ENCODE measurements at regions of chr5 and their contacts with region 1.

Region 1: DNA sequence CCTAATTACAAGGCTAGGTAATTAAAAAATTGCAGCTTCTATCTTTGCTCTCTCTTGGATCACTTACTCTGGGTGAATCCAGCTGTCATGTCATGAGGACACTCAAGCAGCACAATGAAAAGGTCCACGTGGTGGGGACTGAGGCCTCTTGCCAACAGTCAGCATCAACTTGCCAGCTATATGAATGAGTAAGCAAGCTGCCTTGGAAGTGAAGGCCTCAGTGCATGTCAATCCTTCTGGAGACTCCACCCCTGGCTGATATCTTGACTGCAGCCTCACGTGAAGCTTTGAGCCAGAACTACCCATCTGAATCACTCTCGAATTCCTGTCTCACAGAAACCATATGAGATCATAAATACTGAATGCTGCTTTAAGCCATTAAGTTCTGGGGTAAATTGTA is 140.5 kb downstream of the SNX18 start:
- DNase-seq: no peak
- ATAC-seq: no peak

Region 2: GRCh38 chr5:54703133-54703532 is 45.1 kb after region 1 on chr5:
- intact Hi-C with region 1: loop called (anchors 5 kb)
- DNase-seq: no peak
- ATAC-seq: peak; percentile 74

Region 3: DNA sequence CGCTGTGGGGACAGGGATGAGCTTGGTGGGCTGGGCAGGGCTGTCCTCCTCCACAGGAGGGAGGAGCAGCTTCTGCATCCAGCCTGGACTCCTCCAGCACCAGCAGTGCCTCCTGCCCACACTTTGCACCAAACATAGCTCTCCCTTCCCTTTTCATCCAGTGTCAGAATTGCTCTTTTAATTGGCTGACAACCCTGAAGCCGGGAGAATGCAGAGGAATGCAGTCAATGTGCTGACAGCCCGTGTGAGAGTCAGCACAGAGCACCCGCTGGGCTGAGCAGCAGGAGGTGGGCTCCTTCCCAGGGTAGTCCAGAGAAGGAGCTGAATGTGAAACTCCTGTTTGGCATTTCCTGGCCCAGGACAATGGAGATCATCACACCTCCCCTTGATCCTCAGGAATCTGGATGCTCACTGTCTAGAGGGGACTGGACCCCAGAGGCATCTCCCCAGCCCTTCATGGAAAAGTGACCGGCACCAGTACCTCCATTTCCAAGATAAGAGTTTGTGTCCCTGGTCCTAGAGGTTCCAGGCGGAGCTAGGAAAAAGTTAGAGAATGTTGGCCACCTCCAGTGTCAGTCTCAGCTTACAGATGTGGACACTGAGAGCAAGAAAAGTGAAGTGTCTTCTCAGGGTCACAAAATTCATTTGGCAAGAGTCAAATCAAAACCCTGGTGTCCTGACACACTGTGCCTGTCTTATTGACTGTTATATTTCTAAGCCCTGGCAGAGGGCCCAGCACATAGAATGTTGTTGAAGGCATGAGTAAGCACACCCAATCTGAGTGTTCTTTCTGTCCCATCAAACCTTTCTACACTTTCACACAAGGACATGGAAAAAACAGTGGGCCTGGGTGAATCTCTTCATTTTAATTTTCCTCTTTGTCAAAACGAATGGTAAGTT is 61.6 kb after region 1 on chr5:
- intact Hi-C with region 1: loop called (anchors 5 kb)
- DNase-seq: peak; percentile 74
- ATAC-seq: peak; percentile 90

Region 4: GRCh38 chr5:54832858-54833257 is 174.8 kb after region 1 on chr5:
- intact Hi-C with region 1: loop called (anchors 5 kb)
- DNase-seq: no peak
- ATAC-seq: no peak